ENCODE measurements at regions of chr19 and their contacts with region 1.

Region 1: GRCh38 chr19:43519436-43520088 is 7.4 kb downstream of the ETHE1 start:
- DNase-seq: peak; percentile 81 to 92
- ATAC-seq: peak; percentile 87 to 88
- H3K4me3 ChIP-seq: no peak overlapping the region
- H3K27ac ChIP-seq: no peak overlapping the region
- H3K4me1 ChIP-seq: peaks cover 16% of the 10 kb centered on the region; the same call in 2 of the 3 replicates
- CTCF ChIP-seq: peak; percentile 99
- EP300 ChIP-seq: no peak
- POLR2A ChIP-seq: no peak
- RAD21 ChIP-seq: peak; percentile 97 to 98

Region 2: GRCh38 chr19:42985618-42986017 is 533.9 kb before region 1 on chr19:
- CTCF ChIA-PET with region 1: no interaction called
- POLR2A ChIA-PET with region 1: no interaction called
- DNase-seq: no peak
- ATAC-seq: no peak
- H3K4me3 ChIP-seq: no peak overlapping the region
- H3K27ac ChIP-seq: no peak overlapping the region
- H3K4me1 ChIP-seq: no peaks in the 10 kb centered on the region; the same call in 2 of the 3 replicates
- CTCF ChIP-seq: no peak
- EP300 ChIP-seq: no peak
- POLR2A ChIP-seq: no peak
- RAD21 ChIP-seq: no peak

Region 3: DNA sequence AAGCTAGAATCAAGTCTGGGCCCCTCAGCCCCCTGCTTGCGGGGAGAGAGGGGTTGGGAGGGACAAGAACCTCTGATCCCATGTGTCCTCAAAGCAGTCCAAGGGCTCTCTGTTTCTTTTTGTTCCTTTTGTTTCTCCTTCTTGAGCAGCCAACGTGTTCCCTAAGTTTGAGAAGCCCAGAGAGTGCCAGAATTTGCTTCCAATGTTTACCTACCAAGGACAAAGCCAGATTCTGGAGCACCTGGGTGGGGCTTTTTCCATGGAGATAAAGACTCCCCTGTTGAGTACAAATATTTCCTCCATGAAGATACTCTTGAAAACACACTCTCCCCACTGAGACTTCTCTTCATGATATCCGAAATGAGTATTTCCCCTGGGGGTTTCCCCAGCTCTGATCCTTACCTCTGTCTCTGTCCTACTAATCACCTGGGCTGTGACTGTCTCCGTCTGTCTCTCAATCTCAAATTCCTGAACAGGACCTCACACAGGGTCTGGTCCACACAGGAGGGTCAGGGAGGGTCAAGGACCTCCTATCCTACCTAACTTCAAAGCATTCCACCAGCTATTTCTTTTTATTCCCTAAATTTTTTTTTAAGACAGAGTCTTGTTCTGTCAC is 138.7 kb before region 1 on chr19:
- CTCF ChIA-PET with region 1: no interaction called
- POLR2A ChIA-PET with region 1: no interaction called
- DNase-seq: no peak
- ATAC-seq: no peak
- H3K4me3 ChIP-seq: no peak overlapping the region
- H3K27ac ChIP-seq: no peak overlapping the region
- H3K4me1 ChIP-seq: no peaks in the 10 kb centered on the region
- CTCF ChIP-seq: no peak
- EP300 ChIP-seq: no peak
- POLR2A ChIP-seq: no peak
- RAD21 ChIP-seq: no peak

Region 4: GRCh38 chr19:43416951-43417623 is 102.5 kb before region 1 on chr19:
- CTCF ChIA-PET with region 1: interaction called, 10 read pairs
- POLR2A ChIA-PET with region 1: no interaction called
- DNase-seq: no peak
- ATAC-seq: no peak
- H3K4me3 ChIP-seq: no peak overlapping the region
- H3K27ac ChIP-seq: no peak overlapping the region
- H3K4me1 ChIP-seq: no peaks in the 10 kb centered on the region
- CTCF ChIP-seq: no peak
- EP300 ChIP-seq: no peak
- POLR2A ChIP-seq: no peak
- RAD21 ChIP-seq: no peak

Region 5: DNA sequence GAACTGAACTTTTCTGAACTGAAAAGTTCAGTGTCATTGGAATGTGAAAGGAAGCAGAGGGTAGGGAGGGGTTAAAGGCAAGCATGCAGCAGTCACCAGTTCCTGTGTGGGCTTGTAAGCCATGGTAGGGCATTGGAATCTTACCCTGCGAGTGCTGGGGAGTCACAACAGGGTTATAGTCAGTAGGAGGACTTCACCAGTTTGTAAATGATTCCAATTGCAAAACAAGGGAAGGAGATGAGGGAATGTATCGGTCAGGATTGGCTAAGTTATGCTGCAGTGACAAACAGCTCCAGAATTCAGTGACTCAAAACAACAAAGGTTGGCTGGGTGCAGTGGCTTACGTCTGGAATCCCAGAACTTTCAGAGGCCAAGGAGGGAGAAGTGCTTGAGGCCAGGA is 67.0 kb before region 1 on chr19:
- CTCF ChIA-PET with region 1: interaction called, 462 read pairs
- POLR2A ChIA-PET with region 1: interaction called, 8 read pairs
- DNase-seq: no peak
- ATAC-seq: no peak
- H3K4me3 ChIP-seq: no peak overlapping the region
- H3K27ac ChIP-seq: no peak overlapping the region
- H3K4me1 ChIP-seq: no peaks in the 10 kb centered on the region
- CTCF ChIP-seq: no peak
- EP300 ChIP-seq: no peak
- POLR2A ChIP-seq: no peak
- RAD21 ChIP-seq: no peak

Region 6: GRCh38 chr19:43463381-43464136 is 56.0 kb before region 1 on chr19:
- CTCF ChIA-PET with region 1: interaction called, 22 read pairs
- POLR2A ChIA-PET with region 1: interaction called, 9 read pairs
- DNase-seq: peak; percentile 97 to 98
- ATAC-seq: peak; percentile 84 to 91
- H3K4me3 ChIP-seq: peak overlapping the region; percentile 62
- H3K27ac ChIP-seq: peak overlapping the region; percentile 52 to 79; a peak in 5 of 6 replicates
- H3K4me1 ChIP-seq: peaks cover 15% of the 10 kb centered on the region
- CTCF ChIP-seq: no peak
- EP300 ChIP-seq: no peak
- POLR2A ChIP-seq: no peak; the same call in 1 of the 2 replicates
- RAD21 ChIP-seq: no peak

Region 7: DNA sequence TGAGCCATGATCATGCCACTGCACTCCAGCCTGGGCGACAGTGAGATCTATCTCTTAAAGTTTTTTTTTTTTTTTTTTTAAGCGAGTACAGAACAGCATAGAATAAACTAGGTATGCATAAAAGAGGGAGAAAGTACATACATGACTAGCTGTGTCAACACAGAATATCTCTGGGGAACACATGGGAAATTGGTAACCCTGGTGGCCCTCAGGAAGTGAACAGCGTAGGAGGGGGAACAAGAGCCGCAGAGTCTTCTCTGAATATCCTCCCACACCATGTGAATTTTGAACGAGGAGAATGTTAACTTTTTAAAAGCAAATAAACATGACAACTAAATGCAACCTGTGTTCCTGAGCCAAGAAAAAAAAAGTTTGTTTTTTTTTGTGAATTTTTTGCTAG is 30.3 kb before region 1 on chr19:
- CTCF ChIA-PET with region 1: interaction called, 37 read pairs
- POLR2A ChIA-PET with region 1: no interaction called
- DNase-seq: no peak
- ATAC-seq: no peak
- H3K4me3 ChIP-seq: no peak overlapping the region
- H3K27ac ChIP-seq: no peak overlapping the region
- H3K4me1 ChIP-seq: no peaks in the 10 kb centered on the region
- CTCF ChIP-seq: no peak
- EP300 ChIP-seq: no peak
- POLR2A ChIP-seq: no peak
- RAD21 ChIP-seq: no peak

Region 8: DNA sequence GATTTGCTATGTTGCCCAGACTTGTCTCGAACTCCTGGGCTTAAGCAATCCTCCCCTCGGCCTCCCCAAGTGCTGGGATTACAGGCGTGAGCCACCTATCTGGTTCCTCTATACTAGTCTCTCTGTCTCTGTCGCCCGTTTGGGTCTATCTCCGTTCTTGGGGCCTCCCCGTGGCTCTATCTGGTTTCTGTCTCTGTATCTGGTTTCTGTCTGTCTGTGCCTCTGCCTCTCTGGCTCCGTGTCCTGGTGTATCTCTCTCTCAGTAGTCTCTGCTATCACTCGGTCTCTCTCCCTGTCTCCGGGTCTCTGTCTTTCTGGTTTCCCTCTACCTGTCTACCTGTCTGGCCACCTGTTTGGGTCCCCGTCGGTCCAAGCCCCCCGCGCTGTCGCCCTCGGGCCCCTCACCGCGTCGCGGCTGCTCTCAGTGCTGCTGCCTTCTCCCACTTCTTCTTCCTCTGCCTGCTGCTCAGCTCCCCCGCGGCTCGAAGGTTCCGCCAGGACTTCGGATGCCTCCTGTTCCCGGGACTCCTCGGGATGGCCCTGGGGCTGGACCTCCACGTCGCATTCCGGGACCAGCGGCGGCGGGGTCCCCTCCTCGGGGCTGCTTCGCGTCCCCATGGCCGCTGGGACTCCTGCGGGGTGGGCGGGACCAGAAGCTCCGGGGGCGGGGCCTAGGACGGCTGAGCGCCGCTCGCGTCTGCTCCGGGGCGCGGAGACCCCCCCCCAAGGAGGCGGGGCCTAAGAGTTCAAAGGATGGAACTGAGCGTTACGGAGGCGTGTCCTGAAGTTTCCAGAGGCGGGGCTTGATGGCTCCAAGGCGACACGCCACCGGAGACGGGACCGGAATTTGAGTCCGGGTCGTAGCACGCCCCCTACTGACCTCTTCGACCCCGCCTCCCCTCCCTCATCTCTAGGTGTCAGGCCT is 15.8 kb before region 1 on chr19:
- CTCF ChIA-PET with region 1: interaction called, 84 read pairs
- POLR2A ChIA-PET with region 1: interaction called, 8 read pairs
- DNase-seq: peak; percentile 94 to 95
- ATAC-seq: peak; percentile 81 to 93
- H3K4me3 ChIP-seq: peak overlapping the region; percentile 68
- H3K27ac ChIP-seq: peak overlapping the region; percentile 76 to 93
- H3K4me1 ChIP-seq: peaks cover 9% of the 10 kb centered on the region; the same call in 2 of the 3 replicates
- CTCF ChIP-seq: peak; percentile 56; the same call in 2 of the 3 replicates
- EP300 ChIP-seq: no peak
- POLR2A ChIP-seq: no peak; the same call in none of the 2 replicates
- RAD21 ChIP-seq: peak; percentile 9 to 46; a peak in 2 of 5 replicates

Measured in A549 (cell line).